Posterior vena cava (tissue), 2 donors: ENCODE measurements at regions of chr4 and their contacts with region 1.

Region 1: GRCh38 chr4:5357870-5358269 is 306.6 kb downstream of the STK32B start:
- DNase-seq: no peak

Region 2: GRCh38 chr4:5307928-5308327 is 49.9 kb before region 1 on chr4:
- intact Hi-C with region 1: loop called in 1 of 2 experiments (anchors 2 kb)
- DNase-seq: no peak